Esophagus squamous epithelium (tissue), 5 donors: ENCODE measurements at regions of chr2 and their contacts with region 1.

Region 1: GRCh38 chr2:179226203-179226960 is 38.2 kb downstream of the SESTD1 start:
- DNase-seq: no peak
- H3K4me3 ChIP-seq: no peak overlapping the region
- H3K27ac ChIP-seq: no peak overlapping the region
- H3K4me1 ChIP-seq: peaks cover 0 to 4% (median 0%) of the 10 kb centered on the region in 3 donors
- H3K27me3 ChIP-seq: no peaks in the 10 kb centered on the region
- CTCF ChIP-seq: no peak
- POLR2A ChIP-seq: no peak

Region 2: GRCh38 chr2:179340668-179341067 is 114.3 kb after region 1 on chr2:
- intact Hi-C with region 1: loop called (anchors 10 kb)
- DNase-seq: no peak
- H3K4me3 ChIP-seq: no peak overlapping the region
- H3K27ac ChIP-seq: peak overlapping the region in 3 of 4 donors; percentile 14 to 60 (median 25)
- H3K4me1 ChIP-seq: peaks cover 0 to 43% (median 19%) of the 10 kb centered on the region in 3 donors
- H3K27me3 ChIP-seq: no peaks in the 10 kb centered on the region
- CTCF ChIP-seq: peak in 4 of 6 experiments; percentile 32 to 38 (median 37)
- POLR2A ChIP-seq: no peak